Right cardiac atrium (tissue), 5 donors: ENCODE measurements at regions of chr3 and their contacts with region 1.

Region 1: DNA sequence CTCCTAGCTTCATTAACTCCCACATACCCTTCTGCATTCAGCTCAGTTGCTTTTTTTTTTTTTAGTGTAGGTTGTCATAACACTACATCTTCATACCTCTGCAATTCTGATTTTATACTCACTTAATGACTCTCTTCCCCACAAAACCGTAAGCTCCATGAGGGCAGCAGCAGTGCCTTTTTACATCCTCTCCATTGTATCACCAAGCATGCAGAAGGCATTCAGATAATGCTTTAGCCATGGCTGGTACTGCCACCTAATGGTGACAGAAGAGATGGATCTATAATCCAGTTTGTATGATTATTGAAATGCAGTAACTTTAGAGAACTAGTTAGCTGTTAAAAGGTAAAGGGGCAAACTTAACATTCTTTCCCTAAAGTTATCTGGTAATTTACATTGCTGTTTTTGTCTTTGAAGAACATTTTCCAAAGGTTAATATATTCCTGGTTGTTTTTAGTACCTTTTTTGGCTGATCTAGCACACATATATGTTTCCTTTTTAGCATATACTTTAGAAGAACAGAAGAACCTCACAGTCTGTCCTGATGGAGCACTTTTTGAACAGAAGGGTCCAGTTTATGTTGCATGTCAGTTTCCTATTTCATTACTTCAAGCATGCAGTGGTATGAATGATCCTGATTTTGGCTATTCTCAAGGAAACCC is 36.8 kb downstream of the ATP1B3 start:
- DNase-seq: no peak
- ATAC-seq: peak; percentile 67 to 82
- H3K4me3 ChIP-seq: no peak overlapping the region
- H3K27ac ChIP-seq: no peak overlapping the region
- H3K4me1 ChIP-seq: no peaks in the 10 kb centered on the region
- H3K27me3 ChIP-seq: no peaks in the 10 kb centered on the region

Region 2: GRCh38 chr3:141680620-141681389 is 232.5 kb before region 1 on chr3:
- intact Hi-C with region 1: no loop called
- DNase-seq: peak in 2 of 3 donors; percentile 22 to 59
- ATAC-seq: peak; percentile 54 to 68
- H3K4me3 ChIP-seq: no peak overlapping the region
- H3K27ac ChIP-seq: peak overlapping the region; percentile 30
- H3K4me1 ChIP-seq: peaks cover 2% of the 10 kb centered on the region
- H3K27me3 ChIP-seq: no peaks in the 10 kb centered on the region

Region 3: GRCh38 chr3:141738022-141738890 is 175.0 kb before region 1 on chr3 and contains the start of gene RNF7:
- intact Hi-C with region 1: loop called in 1 of 4 experiments (anchors 5 kb)
- DNase-seq: peak; percentile 95 to 98 (median 98)
- ATAC-seq: peak; percentile 98 to 99
- H3K4me3 ChIP-seq: peak within 1 kb of the TSS; percentile 91
- H3K27ac ChIP-seq: peak within 1 kb of the TSS; percentile 93
- H3K4me1 ChIP-seq: no peaks in the 10 kb centered on the region
- H3K27me3 ChIP-seq: no peaks in the 10 kb centered on the region
- total RNA-seq, gene RNF7: 66.2 to 91.6 (median 75.3) TPM